ENCODE measurements at regions of chr9 and their contacts with region 1.

Region 1: GRCh38 chr9:124320062-124320973 is 62.6 kb downstream of the NEK6 start:
- DNase-seq: peak; percentile 51 to 80
- ATAC-seq: peak; percentile 88

Region 2: DNA sequence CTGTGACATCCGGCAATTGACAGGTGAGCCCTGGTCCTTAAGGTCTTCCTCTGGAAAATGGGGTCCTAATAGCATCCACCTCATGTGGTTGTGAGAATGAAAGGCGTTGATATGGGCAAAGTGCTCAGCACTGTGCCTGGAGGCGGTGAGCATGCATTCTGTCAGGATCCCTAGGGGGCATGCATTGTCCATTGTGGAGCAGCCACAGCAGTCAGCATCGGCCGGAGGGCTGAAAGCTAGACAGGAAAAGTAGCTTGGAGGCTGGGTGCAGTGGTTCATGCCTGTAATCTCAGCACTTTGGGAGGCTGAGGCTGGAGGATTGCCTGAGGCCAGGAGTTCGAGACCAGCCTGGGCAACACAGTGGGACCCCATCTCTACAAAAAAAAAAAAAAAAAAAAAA is 186.6 kb before region 1 on chr9:
- intact Hi-C with region 1: loop called (anchors 5 to 10 kb)
- DNase-seq: peak; percentile 40 to 76
- ATAC-seq: peak; percentile 99